ENCODE measurements at regions of chr15 and their contacts with region 1.

Region 1: GRCh38 chr15:31488426-31489204 is 162.0 kb downstream of the KLF13 start:
- DNase-seq: no peak
- H3K4me3 ChIP-seq: no peak overlapping the region
- H3K27ac ChIP-seq: peak overlapping the region; percentile 29
- H3K4me1 ChIP-seq: peaks cover 27% of the 10 kb centered on the region
- H3K27me3 ChIP-seq: peaks cover 4% of the 10 kb centered on the region
- CTCF ChIP-seq: peak; percentile 95

Region 2: GRCh38 chr15:31200735-31201151 is 287.9 kb before region 1 on chr15:
- intact Hi-C with region 1: loop called (anchors 5 kb)
- DNase-seq: peak; percentile 82
- H3K4me3 ChIP-seq: no peak overlapping the region
- H3K27ac ChIP-seq: no peak overlapping the region
- H3K4me1 ChIP-seq: peaks cover 15% of the 10 kb centered on the region
- H3K27me3 ChIP-seq: no peaks in the 10 kb centered on the region
- CTCF ChIP-seq: peak; percentile 76

Region 3: DNA sequence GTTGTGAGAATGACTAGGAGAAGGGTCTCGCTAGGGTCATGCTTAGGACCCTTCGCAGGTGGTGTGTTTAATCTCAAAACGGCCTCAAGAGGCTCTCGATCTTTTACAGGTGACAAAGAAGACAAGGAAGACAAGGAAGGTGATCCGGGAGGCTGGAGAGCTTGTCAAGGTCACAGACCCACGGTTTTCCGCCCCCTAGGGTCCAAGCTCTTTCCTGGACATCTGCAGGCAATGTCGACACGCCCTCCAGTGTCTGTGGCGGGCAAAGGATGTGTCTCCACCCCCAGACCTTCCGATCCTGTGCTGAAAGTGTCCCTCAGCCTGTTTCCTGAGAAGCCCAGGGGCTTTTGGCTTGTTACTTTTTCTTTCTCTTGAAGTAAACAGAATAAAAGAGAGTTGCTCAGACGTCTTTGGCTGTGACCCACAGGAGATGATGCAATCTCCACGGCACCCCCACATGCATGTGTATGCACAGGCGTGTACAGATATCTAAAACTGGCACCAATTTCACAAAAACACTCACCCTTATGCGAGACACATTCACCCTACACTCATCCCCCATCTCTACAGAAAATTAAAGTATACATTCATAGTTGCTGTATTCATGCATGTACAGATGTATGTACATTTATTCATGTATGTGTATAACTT is 53.2 kb before region 1 on chr15:
- intact Hi-C with region 1: loop called (anchors 10 kb)
- DNase-seq: peak; percentile 83
- H3K4me3 ChIP-seq: peak overlapping the region; percentile 51
- H3K27ac ChIP-seq: peak overlapping the region; percentile 88
- H3K4me1 ChIP-seq: peaks cover 29% of the 10 kb centered on the region
- H3K27me3 ChIP-seq: no peaks in the 10 kb centered on the region
- CTCF ChIP-seq: peak; percentile 88